Activated naive CD4-positive, alpha-beta T cell treated with anti-CD3 and anti-CD28 coated beads, Interleukin-2, amount 10 ng/mL, durations not matched to agents 7 days and 5 days (primary cell): ENCODE measurements at regions of chr17 and their contacts with region 1.

Region 1: GRCh38 chr17:50200457-50201275 is 765 bp downstream of the COL1A1 start:
- DNase-seq: peak; percentile 87
- H3K4me3 Mint-ChIP-seq: peak overlapping the region; percentile 71
- H3K27ac Mint-ChIP-seq: no peak overlapping the region
- H3K4me1 Mint-ChIP-seq: peaks cover 23% of the 10 kb centered on the region
- H3K27me3 Mint-ChIP-seq: peaks cover 95% of the 10 kb centered on the region

Region 2: DNA sequence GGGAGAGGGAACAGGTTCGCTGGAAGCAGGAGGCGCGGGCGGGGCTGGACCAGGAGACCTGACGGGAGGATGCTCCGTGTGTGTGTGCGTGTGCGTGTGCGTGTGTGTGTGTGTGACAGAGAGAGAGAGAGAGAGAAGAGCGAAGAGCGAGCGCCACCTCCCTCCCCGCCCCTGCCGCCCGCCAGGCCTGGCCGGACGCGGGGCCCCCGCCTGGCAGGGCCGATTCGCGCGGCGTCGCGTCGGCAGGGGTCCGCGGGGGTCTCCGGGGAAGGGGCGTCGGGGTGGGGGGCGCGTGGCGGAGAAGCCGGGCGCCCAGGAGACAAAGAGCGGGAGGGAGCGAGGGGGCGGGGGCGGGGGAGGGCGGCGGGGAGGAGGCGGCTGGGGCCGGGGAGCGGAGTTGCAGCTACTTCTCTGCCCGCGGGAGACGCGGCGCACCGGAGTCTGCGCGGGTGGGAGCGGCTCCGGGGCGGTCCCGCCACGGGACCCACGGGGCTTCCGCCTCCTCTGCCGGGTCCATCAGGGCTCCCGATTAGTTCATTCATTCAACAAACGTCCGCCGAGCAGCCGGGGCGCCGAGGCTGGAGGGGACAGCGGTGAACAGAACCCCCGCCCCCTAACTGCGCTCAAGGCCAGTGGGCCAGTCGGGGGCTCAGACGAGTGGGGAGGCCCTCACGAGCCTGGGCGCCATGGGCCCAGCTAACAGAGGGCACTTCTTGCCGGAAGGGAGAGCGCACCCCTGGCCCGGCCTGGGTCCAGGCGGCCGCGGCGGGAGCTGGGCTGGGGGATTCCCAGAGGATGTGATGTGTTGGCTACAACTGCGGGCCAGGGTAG is 70.7 kb before region 1 on chr17 and contains the start of gene SAMD14:
- CTCF ChIA-PET with region 1: no interaction called
- DNase-seq: peak; percentile 70
- H3K4me3 Mint-ChIP-seq: peak within 1 kb of the TSS; percentile 58
- H3K27ac Mint-ChIP-seq: peak within 1 kb of the TSS; percentile 33
- H3K4me1 Mint-ChIP-seq: peaks cover 37% of the 10 kb centered on the region
- H3K27me3 Mint-ChIP-seq: peaks cover 65% of the 10 kb centered on the region

Region 3: DNA sequence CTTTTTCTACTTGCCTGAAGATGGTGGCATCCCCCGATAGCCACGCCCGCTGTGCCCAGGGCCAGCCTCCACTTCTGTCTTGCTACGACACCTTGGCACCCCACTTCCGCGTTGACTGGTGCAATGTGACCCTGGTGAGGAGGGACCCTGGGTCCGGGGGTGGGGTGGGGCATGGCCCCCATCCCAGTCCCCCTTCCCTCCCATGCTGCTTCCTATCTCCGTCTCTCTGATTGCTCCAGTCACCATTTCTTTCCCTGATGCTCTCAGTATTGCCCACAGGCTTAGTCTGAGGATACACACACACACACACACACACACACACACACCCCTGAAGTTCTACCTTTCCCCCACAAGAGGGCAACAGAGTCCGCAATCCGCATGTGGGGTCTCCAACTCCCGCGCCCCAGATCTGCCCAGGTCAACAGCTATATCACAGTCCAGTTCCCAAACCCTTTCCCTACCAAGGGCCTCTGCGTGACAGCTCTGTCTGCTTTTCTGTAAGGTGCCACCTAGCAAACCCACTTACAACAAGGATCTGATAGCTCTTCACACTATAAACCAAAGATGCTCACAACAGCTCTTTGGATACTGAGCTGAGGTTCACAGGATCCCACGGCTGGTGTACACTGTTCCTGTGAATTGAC is 31.4 kb before region 1 on chr17:
- CTCF ChIA-PET with region 1: interaction called, 100 read pairs
- DNase-seq: peak; percentile 68
- H3K4me3 Mint-ChIP-seq: peak overlapping the region; percentile 17
- H3K27ac Mint-ChIP-seq: peak overlapping the region; percentile 6
- H3K4me1 Mint-ChIP-seq: peaks cover 16% of the 10 kb centered on the region
- H3K27me3 Mint-ChIP-seq: peaks cover 49% of the 10 kb centered on the region

Region 4: GRCh38 chr17:50213026-50214022 is 12.7 kb after region 1 on chr17:
- CTCF ChIA-PET with region 1: interaction called, 40 read pairs
- DNase-seq: peak; percentile 70
- H3K4me3 Mint-ChIP-seq: no peak overlapping the region
- H3K27ac Mint-ChIP-seq: no peak overlapping the region
- H3K4me1 Mint-ChIP-seq: peaks cover 11% of the 10 kb centered on the region
- H3K27me3 Mint-ChIP-seq: peaks cover 79% of the 10 kb centered on the region

Region 5: GRCh38 chr17:50283246-50283645 is 82.6 kb after region 1 on chr17:
- CTCF ChIA-PET with region 1: interaction called, 217 read pairs
- DNase-seq: peak; percentile 39
- H3K4me3 Mint-ChIP-seq: no peak overlapping the region
- H3K27ac Mint-ChIP-seq: no peak overlapping the region
- H3K4me1 Mint-ChIP-seq: peaks cover 6% of the 10 kb centered on the region
- H3K27me3 Mint-ChIP-seq: peaks cover 62% of the 10 kb centered on the region

Region 6: GRCh38 chr17:50332196-50332595 is 131.5 kb after region 1 on chr17:
- CTCF ChIA-PET with region 1: interaction called, 14 read pairs
- DNase-seq: no peak
- H3K4me3 Mint-ChIP-seq: no peak overlapping the region
- H3K27ac Mint-ChIP-seq: no peak overlapping the region
- H3K4me1 Mint-ChIP-seq: peaks cover 13% of the 10 kb centered on the region
- H3K27me3 Mint-ChIP-seq: peaks cover 33% of the 10 kb centered on the region

Region 7: GRCh38 chr17:50353600-50354195 is 153.0 kb after region 1 on chr17:
- CTCF ChIA-PET with region 1: no interaction called
- DNase-seq: no peak
- H3K4me3 Mint-ChIP-seq: no peak overlapping the region
- H3K27ac Mint-ChIP-seq: no peak overlapping the region
- H3K4me1 Mint-ChIP-seq: peaks cover 5% of the 10 kb centered on the region
- H3K27me3 Mint-ChIP-seq: no peaks in the 10 kb centered on the region